ENCODE measurements at regions of chr16 and their contacts with region 1.

Region 1: DNA sequence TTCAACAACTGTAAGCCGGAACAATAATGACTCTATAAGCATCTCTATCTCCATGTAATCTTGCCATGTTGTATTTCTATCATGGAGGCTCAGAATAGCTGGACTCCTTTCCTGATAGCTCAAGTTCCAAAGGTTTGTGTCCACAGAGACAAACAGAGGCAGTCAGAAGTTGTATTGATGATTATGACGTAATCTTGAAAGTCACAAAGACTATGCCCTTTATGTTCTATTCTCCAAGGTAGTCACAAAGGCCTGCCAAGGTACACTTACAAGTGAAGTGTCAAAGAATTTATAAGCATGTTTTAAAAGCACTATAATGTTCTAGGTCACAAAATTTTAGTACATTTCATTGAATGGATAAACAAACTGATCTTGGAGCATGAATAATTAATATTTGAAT is 542.2 kb downstream of the CDH11 start:
- DNase-seq: no peak
- H3K4me3 ChIP-seq: no peak overlapping the region
- H3K27ac ChIP-seq: no peak overlapping the region
- H3K4me1 ChIP-seq: no peaks in the 10 kb centered on the region
- H3K27me3 ChIP-seq: no peaks in the 10 kb centered on the region
- CTCF ChIP-seq: no peak
- POLR2A ChIP-seq: no peak

Region 2: GRCh38 chr16:64278196-64278595 is 301.5 kb before region 1 on chr16:
- intact Hi-C with region 1: no loop called
- DNase-seq: no peak
- H3K4me3 ChIP-seq: no peak overlapping the region
- H3K27ac ChIP-seq: no peak overlapping the region
- H3K4me1 ChIP-seq: no peaks in the 10 kb centered on the region
- H3K27me3 ChIP-seq: no peaks in the 10 kb centered on the region
- CTCF ChIP-seq: no peak
- POLR2A ChIP-seq: no peak

Region 3: GRCh38 chr16:64627288-64627687 is 47.6 kb after region 1 on chr16:
- intact Hi-C with region 1: no loop called
- DNase-seq: no peak
- H3K4me3 ChIP-seq: no peak overlapping the region
- H3K27ac ChIP-seq: no peak overlapping the region
- H3K4me1 ChIP-seq: no peaks in the 10 kb centered on the region
- H3K27me3 ChIP-seq: no peaks in the 10 kb centered on the region
- CTCF ChIP-seq: no peak
- POLR2A ChIP-seq: no peak

Region 4: DNA sequence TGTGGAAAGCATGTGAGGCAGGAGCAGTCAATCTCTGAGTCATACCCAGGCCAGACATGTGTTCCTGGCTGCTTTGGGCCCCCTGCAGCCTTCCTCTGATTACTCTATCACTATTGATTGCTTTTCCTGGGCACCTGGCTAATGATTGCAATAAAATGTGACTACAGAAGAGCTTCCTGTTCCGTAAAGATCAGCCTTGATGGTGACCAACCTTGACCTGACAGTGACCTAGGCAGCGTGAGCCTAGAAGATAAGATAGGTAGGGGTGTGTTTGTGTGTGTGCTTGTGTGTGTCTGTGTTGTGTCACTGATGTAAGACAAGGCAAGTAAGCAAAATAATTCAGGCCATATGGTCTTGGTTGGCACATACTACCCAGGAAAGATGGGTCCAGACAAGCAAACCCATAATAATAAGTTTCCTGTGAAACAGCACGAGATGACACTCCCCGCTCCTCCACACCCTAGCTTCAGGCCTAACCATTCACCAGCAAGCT is 909.9 kb after region 1 on chr16:
- intact Hi-C with region 1: loop called (anchors 5 kb)
- DNase-seq: no peak
- H3K4me3 ChIP-seq: no peak overlapping the region
- H3K27ac ChIP-seq: no peak overlapping the region
- H3K4me1 ChIP-seq: no peaks in the 10 kb centered on the region
- H3K27me3 ChIP-seq: no peaks in the 10 kb centered on the region
- CTCF ChIP-seq: no peak
- POLR2A ChIP-seq: no peak

Measured in breast epithelium (tissue), 4 donors.